K562 (cell line): ENCODE measurements at regions of chr21 and their contacts with region 1.

Region 1: GRCh38 chr21:24127651-24128050 is 1479.6 kb downstream of the MRPL39 start:
- DNase-seq: no peak
- ATAC-seq: no peak
- H3K4me3 ChIP-seq: no peak overlapping the region
- H3K27ac ChIP-seq: no peak overlapping the region
- H3K4me1 ChIP-seq: no peaks in the 10 kb centered on the region
- H3K27me3 ChIP-seq: no peaks in the 10 kb centered on the region
- CTCF ChIP-seq: no peak
- EP300 ChIP-seq: no peak
- POLR2A ChIP-seq: no peak
- RAD21 ChIP-seq: no peak

Region 2: GRCh38 chr21:22561946-22562345 is 1565.7 kb before region 1 on chr21:
- CTCF ChIA-PET with region 1: no interaction called
- POLR2A ChIA-PET with region 1: no interaction called
- in situ Hi-C with region 1: loop called (anchors 25 kb)
- intact Hi-C with region 1: no loop called
- DNase-seq: no peak
- ATAC-seq: no peak
- H3K4me3 ChIP-seq: no peak overlapping the region
- H3K27ac ChIP-seq: no peak overlapping the region
- H3K4me1 ChIP-seq: no peaks in the 10 kb centered on the region
- H3K27me3 ChIP-seq: no peaks in the 10 kb centered on the region
- CTCF ChIP-seq: no peak
- EP300 ChIP-seq: no peak
- POLR2A ChIP-seq: no peak
- RAD21 ChIP-seq: no peak